ENCODE measurements at regions of chr21 and their contacts with region 1.

Region 1: DNA sequence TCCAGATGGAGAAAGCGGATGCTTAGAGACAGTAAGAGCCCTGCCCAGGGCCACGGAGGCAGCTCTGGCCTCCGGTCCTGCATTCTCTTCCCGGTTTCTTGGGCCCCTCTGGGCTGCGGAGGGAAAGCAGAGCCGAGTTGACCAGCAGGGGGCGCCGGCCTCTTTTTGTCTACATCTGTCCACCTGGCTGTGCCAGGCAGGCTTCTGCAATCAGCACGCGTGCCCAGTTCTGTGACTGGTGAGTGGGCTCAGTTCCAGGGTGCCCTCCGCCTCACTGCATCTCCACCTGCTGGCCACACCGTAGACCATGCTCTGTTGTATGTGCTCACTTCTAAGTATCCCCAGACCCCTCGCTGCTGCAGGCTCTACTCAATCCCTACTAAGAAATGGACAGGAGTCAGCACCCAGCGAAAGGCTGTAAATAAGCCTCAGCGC is 6.7 kb upstream of the HUNK start:
- DNase-seq: peak; percentile 79 to 82
- H3K4me3 ChIP-seq: no peak overlapping the region
- H3K4me3 Mint-ChIP-seq: no peak overlapping the region
- H3K27ac Mint-ChIP-seq: no peak overlapping the region
- H3K4me1 ChIP-seq: no peaks in the 10 kb centered on the region
- H3K4me1 Mint-ChIP-seq: no peaks in the 10 kb centered on the region
- H3K27me3 ChIP-seq: peaks cover 2% of the 10 kb centered on the region
- H3K27me3 Mint-ChIP-seq: peaks cover 12% of the 10 kb centered on the region
- CTCF ChIP-seq: peak; percentile 77 to 83

Region 2: DNA sequence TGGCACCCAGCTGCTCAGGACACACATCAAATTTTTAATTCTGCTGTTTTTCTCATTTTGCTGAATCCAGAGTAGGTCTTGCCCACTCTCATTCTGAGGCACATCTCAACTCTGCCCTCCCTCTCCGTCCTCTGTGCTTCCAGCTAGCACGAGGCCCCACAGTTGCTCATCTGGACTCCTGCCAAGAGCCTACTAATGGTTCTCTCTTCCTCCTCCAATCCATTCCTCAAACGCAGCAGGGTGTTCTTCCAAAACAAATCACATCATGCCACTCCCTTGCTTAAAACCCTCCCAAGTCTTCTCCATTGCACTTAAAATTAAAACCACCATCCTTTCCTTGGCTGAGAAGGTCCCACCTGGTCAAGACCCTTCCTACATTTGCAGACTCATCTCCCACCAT is 84.4 kb before region 1 on chr21:
- CTCF ChIA-PET with region 1: interaction called, 3 read pairs
- POLR2A ChIA-PET with region 1: no interaction called
- intact Hi-C with region 1: loop called (anchors 2 kb)
- DNase-seq: no peak
- H3K4me3 ChIP-seq: no peak overlapping the region
- H3K4me3 Mint-ChIP-seq: no peak overlapping the region
- H3K27ac Mint-ChIP-seq: no peak overlapping the region
- H3K4me1 ChIP-seq: no peaks in the 10 kb centered on the region
- H3K4me1 Mint-ChIP-seq: no peaks in the 10 kb centered on the region
- H3K27me3 ChIP-seq: no peaks in the 10 kb centered on the region
- H3K27me3 Mint-ChIP-seq: peaks cover 17% of the 10 kb centered on the region
- CTCF ChIP-seq: no peak

Measured in Caco-2 (cell line).